ENCODE measurements at regions of chr12 and their contacts with region 1.

Region 1: GRCh38 chr12:7018350-7019042 is at the start of gene LPCAT3:
- DNase-seq: peak; percentile 98
- ATAC-seq: peak; percentile 93
- H3K4me3 ChIP-seq: peak within 1 kb of the TSS; percentile 71 to 92 (median 81)
- H3K4me3 Mint-ChIP-seq: peak within 1 kb of the TSS; percentile 88
- H3K27ac ChIP-seq: peak within 1 kb of the TSS; percentile 71 to 78
- H3K27ac Mint-ChIP-seq: peak within 1 kb of the TSS; percentile 69
- H3K4me1 ChIP-seq: peaks cover 7 to 17% of the 10 kb centered on the region in 2 donors
- H3K4me1 Mint-ChIP-seq: peaks cover 18% of the 10 kb centered on the region
- H3K27me3 ChIP-seq: no peaks in the 10 kb centered on the region
- H3K27me3 Mint-ChIP-seq: no peaks in the 10 kb centered on the region
- CTCF ChIP-seq: peak; percentile 88
- total RNA-seq, gene LPCAT3: 26.2 and 26.3 TPM in 2 replicates

Region 2: GRCh38 chr12:6723607-6724396 is 294.7 kb before region 1 on chr12 and contains the start of gene COPS7A:
- CTCF ChIA-PET with region 1: no interaction called
- POLR2A ChIA-PET with region 1: no interaction called
- intact Hi-C with region 1: no loop called
- DNase-seq: peak; percentile 98
- ATAC-seq: peak; percentile 89
- H3K4me3 ChIP-seq: peak within 1 kb of the TSS; percentile 53 to 65 (median 63)
- H3K4me3 Mint-ChIP-seq: peak within 1 kb of the TSS; percentile 91
- H3K27ac ChIP-seq: peak within 1 kb of the TSS; percentile 81 to 86
- H3K27ac Mint-ChIP-seq: peak within 1 kb of the TSS; percentile 94
- H3K4me1 ChIP-seq: peaks cover 13 to 17% of the 10 kb centered on the region in 2 donors
- H3K4me1 Mint-ChIP-seq: peaks cover 19% of the 10 kb centered on the region
- H3K27me3 ChIP-seq: no peaks in the 10 kb centered on the region
- H3K27me3 Mint-ChIP-seq: no peaks in the 10 kb centered on the region
- CTCF ChIP-seq: no peak
- total RNA-seq, gene COPS7A: 28.3 and 29.4 TPM in 2 replicates

Region 3: GRCh38 chr12:6851921-6852650 is 166.4 kb before region 1 on chr12 and contains the start of gene USP5:
- CTCF ChIA-PET with region 1: no interaction called
- POLR2A ChIA-PET with region 1: interaction called, 4 read pairs
- intact Hi-C with region 1: loop called (anchors 1 kb)
- DNase-seq: peak; percentile 100
- ATAC-seq: peak; percentile 76
- H3K4me3 ChIP-seq: peak within 1 kb of the TSS; percentile 85 to 98 (median 92)
- H3K4me3 Mint-ChIP-seq: peak within 1 kb of the TSS; percentile 92
- H3K27ac ChIP-seq: peak within 1 kb of the TSS; percentile 91
- H3K27ac Mint-ChIP-seq: peak within 1 kb of the TSS; percentile 93
- H3K4me1 ChIP-seq: peaks cover 6 to 23% of the 10 kb centered on the region in 2 donors
- H3K4me1 Mint-ChIP-seq: peaks cover 23% of the 10 kb centered on the region
- H3K27me3 ChIP-seq: no peaks in the 10 kb centered on the region
- H3K27me3 Mint-ChIP-seq: no peaks in the 10 kb centered on the region
- CTCF ChIP-seq: no peak
- total RNA-seq, gene USP5: 56.8 and 59.7 TPM in 2 replicates

Region 4: GRCh38 chr12:6890789-6891645 is 127.5 kb before region 1 on chr12:
- CTCF ChIA-PET with region 1: interaction called, 5 read pairs
- POLR2A ChIA-PET with region 1: no interaction called
- intact Hi-C with region 1: loop called (anchors 1 kb)
- DNase-seq: peak; percentile 98
- ATAC-seq: peak; percentile 95
- H3K4me3 ChIP-seq: peak overlapping the region; percentile 61 to 79 (median 76)
- H3K4me3 Mint-ChIP-seq: peak overlapping the region; percentile 87
- H3K27ac ChIP-seq: peak overlapping the region; percentile 93 to 94
- H3K27ac Mint-ChIP-seq: peak overlapping the region; percentile 91
- H3K4me1 ChIP-seq: peaks cover 9 to 13% of the 10 kb centered on the region in 2 donors
- H3K4me1 Mint-ChIP-seq: peaks cover 15% of the 10 kb centered on the region
- H3K27me3 ChIP-seq: no peaks in the 10 kb centered on the region
- H3K27me3 Mint-ChIP-seq: no peaks in the 10 kb centered on the region
- CTCF ChIP-seq: peak; percentile 90

Region 5: GRCh38 chr12:6937481-6938297 is 80.8 kb before region 1 on chr12:
- CTCF ChIA-PET with region 1: no interaction called
- POLR2A ChIA-PET with region 1: interaction called, 3 read pairs
- intact Hi-C with region 1: loop called (anchors 2 kb)
- DNase-seq: peak; percentile 98
- ATAC-seq: peak; percentile 91
- H3K4me3 ChIP-seq: peak overlapping the region; percentile 28 to 94 (median 80)
- H3K4me3 Mint-ChIP-seq: peak overlapping the region; percentile 87
- H3K27ac ChIP-seq: peak overlapping the region; percentile 88 to 91
- H3K27ac Mint-ChIP-seq: peak overlapping the region; percentile 97
- H3K4me1 ChIP-seq: peaks cover 17 to 31% of the 10 kb centered on the region in 2 donors
- H3K4me1 Mint-ChIP-seq: peaks cover 37% of the 10 kb centered on the region
- H3K27me3 ChIP-seq: no peaks in the 10 kb centered on the region
- H3K27me3 Mint-ChIP-seq: no peaks in the 10 kb centered on the region
- CTCF ChIP-seq: peak; percentile 92

Region 6: DNA sequence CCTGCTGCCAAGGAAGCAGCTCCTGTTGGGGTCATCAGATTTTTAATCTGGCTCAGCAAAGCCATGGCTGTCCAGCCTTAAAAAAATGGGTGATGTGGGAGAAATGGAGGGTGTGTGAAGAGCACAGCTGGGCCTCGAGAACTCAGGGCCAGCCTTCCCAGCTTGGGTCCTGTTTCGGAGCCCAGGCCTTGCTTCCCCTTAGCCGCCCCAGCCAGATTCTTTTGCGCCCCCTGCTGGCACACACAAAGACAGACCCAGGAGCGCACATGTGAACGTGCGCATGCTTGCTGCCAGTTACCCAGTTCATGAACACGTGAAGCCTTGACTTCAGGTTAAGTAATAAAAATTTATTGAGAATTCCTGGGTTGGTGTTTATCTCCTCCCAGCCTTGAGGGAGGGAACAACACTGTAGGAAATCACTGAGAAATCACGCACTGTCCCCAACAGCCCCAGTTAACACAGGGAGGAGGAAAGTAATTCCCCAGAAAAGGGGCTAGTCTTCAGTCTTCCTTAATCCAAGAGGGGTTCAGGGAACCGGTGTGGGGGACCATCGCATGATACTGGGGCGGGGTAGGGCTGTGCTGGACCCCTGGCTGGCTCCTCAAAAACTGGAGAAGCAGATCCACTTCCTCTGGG is 53.4 kb before region 1 on chr12:
- CTCF ChIA-PET with region 1: interaction called, 4 read pairs
- POLR2A ChIA-PET with region 1: no interaction called
- intact Hi-C with region 1: loop called (anchors 1 kb)
- DNase-seq: peak; percentile 93
- ATAC-seq: peak; percentile 57
- H3K4me3 ChIP-seq: no peak overlapping the region
- H3K4me3 Mint-ChIP-seq: no peak overlapping the region
- H3K27ac ChIP-seq: peak overlapping the region; percentile 30 to 63
- H3K27ac Mint-ChIP-seq: peak overlapping the region; percentile 91
- H3K4me1 ChIP-seq: peaks cover 58 to 69% of the 10 kb centered on the region in 2 donors
- H3K4me1 Mint-ChIP-seq: peaks cover 63% of the 10 kb centered on the region
- H3K27me3 ChIP-seq: no peaks in the 10 kb centered on the region
- H3K27me3 Mint-ChIP-seq: no peaks in the 10 kb centered on the region
- CTCF ChIP-seq: peak; percentile 88

Region 7: GRCh38 chr12:7108796-7109571 is 90.5 kb after region 1 on chr12 and contains the start of gene C1RL:
- CTCF ChIA-PET with region 1: interaction called, 5 read pairs
- POLR2A ChIA-PET with region 1: interaction called, 4 read pairs
- intact Hi-C with region 1: loop called (anchors 1 kb)
- DNase-seq: peak; percentile 83
- ATAC-seq: peak; percentile 50
- H3K4me3 ChIP-seq: peak within 1 kb of the TSS; percentile 74 to 94 (median 89)
- H3K4me3 Mint-ChIP-seq: peak within 1 kb of the TSS; percentile 97
- H3K27ac ChIP-seq: peak within 1 kb of the TSS; percentile 63 to 76
- H3K27ac Mint-ChIP-seq: peak within 1 kb of the TSS; percentile 98
- H3K4me1 ChIP-seq: peaks cover 12 to 18% of the 10 kb centered on the region in 2 donors
- H3K4me1 Mint-ChIP-seq: peaks cover 28% of the 10 kb centered on the region
- H3K27me3 ChIP-seq: no peaks in the 10 kb centered on the region
- H3K27me3 Mint-ChIP-seq: no peaks in the 10 kb centered on the region
- CTCF ChIP-seq: peak; percentile 92
- total RNA-seq, gene C1RL: 24.9 and 28.9 TPM in 2 replicates

Region 8: DNA sequence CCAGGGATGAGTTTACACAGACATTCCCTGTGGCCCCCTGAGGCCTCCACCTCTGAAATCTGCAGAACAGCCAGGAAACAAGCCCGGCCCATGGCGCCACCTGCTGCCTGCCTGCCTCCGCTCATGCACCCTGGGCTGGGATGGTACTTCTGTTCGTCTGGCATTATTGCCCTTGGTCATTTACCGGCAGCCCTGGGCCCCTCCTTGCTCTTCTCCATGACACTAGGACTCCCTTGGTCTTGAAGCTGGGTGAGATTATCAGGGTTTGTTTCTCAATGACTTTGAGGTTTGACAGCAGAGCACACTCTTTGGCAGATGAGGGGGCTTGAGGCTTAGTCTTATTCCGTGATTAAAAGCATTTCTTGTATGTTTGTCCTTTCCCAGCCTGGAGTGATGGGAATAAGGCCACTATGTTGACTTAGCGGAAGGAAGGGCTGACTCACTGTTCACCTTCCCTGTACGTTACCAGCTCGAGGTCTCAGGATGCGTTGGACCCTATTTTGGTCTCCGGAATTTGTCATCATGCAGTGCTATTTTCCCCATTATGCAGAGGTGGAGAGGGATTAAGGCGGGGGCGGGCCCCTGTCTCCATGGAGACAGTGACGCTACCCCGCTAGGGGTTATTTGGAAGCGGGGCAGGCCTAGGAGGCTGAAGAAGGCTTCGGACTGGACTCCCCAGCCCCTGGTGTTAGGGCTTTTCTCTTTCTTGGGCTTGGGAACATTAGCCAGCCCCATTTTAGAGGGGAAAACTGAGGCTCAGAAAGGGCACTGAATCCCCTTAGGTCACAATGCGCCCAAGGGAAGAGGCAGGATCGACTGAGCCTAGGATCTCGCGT is 170.3 kb after region 1 on chr12:
- CTCF ChIA-PET with region 1: no interaction called
- POLR2A ChIA-PET with region 1: no interaction called
- intact Hi-C with region 1: loop called (anchors 1 kb)
- DNase-seq: peak; percentile 67
- ATAC-seq: peak; percentile 15
- H3K4me3 ChIP-seq: peak overlapping the region; percentile 84 to 98 (median 94)
- H3K4me3 Mint-ChIP-seq: peak overlapping the region; percentile 93
- H3K27ac ChIP-seq: peak overlapping the region; percentile 82 to 85
- H3K27ac Mint-ChIP-seq: peak overlapping the region; percentile 92
- H3K4me1 ChIP-seq: peaks cover 18 to 23% of the 10 kb centered on the region in 2 donors
- H3K4me1 Mint-ChIP-seq: peaks cover 30% of the 10 kb centered on the region
- H3K27me3 ChIP-seq: no peaks in the 10 kb centered on the region
- H3K27me3 Mint-ChIP-seq: no peaks in the 10 kb centered on the region
- CTCF ChIP-seq: peak; percentile 68

Measured in B cell (primary cell).